G401 (cell line): ENCODE measurements at regions of chr5 and their contacts with region 1.

Region 1: GRCh38 chr5:71693828-71694427 is 25.1 kb upstream of the CARTPT start:
- DNase-seq: no peak

Region 2: DNA sequence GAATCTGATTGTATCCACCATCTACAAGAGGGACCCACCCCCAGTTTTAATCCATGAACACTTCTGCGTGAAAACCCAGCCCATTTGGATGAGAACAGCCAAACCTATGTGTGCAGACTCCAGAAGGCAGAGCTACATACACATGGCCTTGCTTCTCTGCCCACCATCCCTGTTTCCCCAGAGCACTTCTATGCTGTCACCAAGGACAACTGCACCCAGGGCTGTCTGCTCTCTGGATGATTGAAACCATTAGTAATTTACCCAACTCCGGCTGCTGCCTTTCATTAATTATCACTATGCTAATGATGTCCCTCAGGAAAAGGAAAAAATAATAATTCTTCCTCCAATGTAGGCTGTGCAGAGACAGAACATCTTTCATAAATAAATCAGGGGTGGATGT is 34.0 kb after region 1 on chr5:
- in situ Hi-C with region 1: loop called (anchors 5 kb)
- DNase-seq: no peak

Region 3: DNA sequence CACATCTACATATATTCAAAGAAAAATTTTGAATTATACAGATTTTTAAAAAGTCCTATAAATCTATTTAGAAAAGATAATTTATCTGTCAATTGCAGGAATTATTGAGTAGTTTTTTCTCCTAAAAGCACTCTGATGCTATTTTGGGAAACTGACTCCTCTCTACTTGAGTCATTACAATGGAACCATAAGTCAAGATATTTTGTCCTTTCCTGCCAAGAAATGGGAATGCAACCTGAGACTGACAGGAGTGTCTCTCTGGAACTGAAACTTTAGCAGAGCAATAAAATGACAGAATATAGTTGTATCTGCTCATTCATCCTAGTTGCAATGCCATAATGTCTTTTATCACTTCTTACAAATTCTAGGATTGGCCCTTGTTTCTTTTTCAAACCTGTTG is 73.7 kb after region 1 on chr5:
- in situ Hi-C with region 1: loop called (anchors 5 kb)
- DNase-seq: no peak